GM13977 (cell line): ENCODE measurements at regions of chrX and their contacts with region 1.

Region 1: GRCh38 chrX:151680805-151681204 is 14.5 kb upstream of the PRRG3 start:
- DNase-seq: peak; percentile 60
- CTCF ChIP-seq: peak; percentile 71

Region 2: DNA sequence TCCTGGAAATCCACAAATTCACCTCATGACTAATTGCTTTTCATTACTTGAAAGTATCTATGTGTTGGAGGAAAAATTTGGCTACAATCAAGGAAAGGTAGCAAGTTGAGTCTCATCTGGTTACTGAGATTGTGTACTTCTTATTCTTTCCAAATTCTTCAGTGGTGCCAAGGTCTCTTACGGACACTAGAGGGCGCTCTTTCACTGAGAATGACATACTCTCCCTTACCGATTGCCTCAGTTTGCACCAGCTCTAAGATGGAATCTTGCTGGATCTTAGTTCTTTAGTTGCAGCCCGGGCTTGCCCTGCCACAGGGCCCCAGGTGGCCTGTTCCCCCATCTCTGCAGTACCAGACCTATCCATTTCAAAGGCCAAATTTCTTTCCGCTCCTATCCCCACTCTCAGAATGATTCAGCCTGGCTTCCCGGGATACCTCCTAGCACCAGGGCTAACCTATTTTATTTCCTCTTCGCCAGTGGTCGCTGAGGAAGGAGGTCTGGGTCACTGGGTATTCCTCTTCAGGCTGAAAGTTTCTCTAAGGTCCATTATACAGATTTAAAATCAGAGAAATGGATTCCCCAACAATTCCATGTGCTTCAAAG is 529.0 kb before region 1 on chrX:
- in situ Hi-C with region 1: loop called (anchors 25 kb)
- DNase-seq: peak; percentile 36
- CTCF ChIP-seq: peak; percentile 84